ENCODE measurements at regions of chr20 and their contacts with region 1.

Region 1: GRCh38 chr20:33489495-33490022 is 337 bp upstream of the CBFA2T2 start:
- DNase-seq: peak; percentile 97 to 100 (median 99)
- ATAC-seq: peak; percentile 96
- H3K4me3 ChIP-seq: peak overlapping the region; percentile 57
- H3K4me3 Mint-ChIP-seq: peak overlapping the region; percentile 94
- H3K27ac ChIP-seq: peak overlapping the region; percentile 92 to 95
- H3K27ac Mint-ChIP-seq: peak overlapping the region; percentile 96
- H3K4me1 ChIP-seq: peaks cover 26% of the 10 kb centered on the region
- H3K4me1 Mint-ChIP-seq: peaks cover 36% of the 10 kb centered on the region
- H3K27me3 ChIP-seq: no peaks in the 10 kb centered on the region
- H3K27me3 Mint-ChIP-seq: no peaks in the 10 kb centered on the region
- CTCF ChIP-seq: no peak

Region 2: GRCh38 chr20:33097001-33097400 is 392.6 kb before region 1 on chr20:
- CTCF ChIA-PET with region 1: no interaction called
- POLR2A ChIA-PET with region 1: no interaction called
- intact Hi-C with region 1: no loop called
- DNase-seq: no peak
- ATAC-seq: no peak
- H3K4me3 ChIP-seq: no peak overlapping the region
- H3K4me3 Mint-ChIP-seq: no peak overlapping the region
- H3K27ac ChIP-seq: no peak overlapping the region
- H3K27ac Mint-ChIP-seq: no peak overlapping the region
- H3K4me1 ChIP-seq: peaks cover 6% of the 10 kb centered on the region
- H3K4me1 Mint-ChIP-seq: peaks cover 11% of the 10 kb centered on the region
- H3K27me3 ChIP-seq: no peaks in the 10 kb centered on the region
- H3K27me3 Mint-ChIP-seq: no peaks in the 10 kb centered on the region
- CTCF ChIP-seq: no peak

Region 3: DNA sequence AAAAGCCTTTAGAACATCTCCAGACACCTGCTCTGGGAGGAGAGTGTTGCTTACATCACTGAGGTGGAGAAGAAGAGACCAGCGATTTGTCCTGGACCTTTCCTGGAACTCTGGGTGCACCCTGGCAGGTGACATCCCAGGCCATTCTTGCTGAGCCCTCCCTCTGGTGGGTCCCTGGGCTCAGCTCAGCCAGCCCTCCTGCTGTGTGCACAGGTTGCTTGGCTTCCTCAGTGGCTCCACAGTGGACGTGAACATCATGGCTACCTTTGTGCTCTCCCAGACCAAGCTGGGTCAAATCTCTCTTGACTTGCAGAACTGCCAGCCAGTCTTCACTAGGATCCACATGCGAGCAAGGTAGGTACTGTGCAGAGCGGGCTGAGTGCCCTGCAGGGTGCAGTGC is 341.5 kb before region 1 on chr20:
- CTCF ChIA-PET with region 1: no interaction called
- POLR2A ChIA-PET with region 1: no interaction called
- intact Hi-C with region 1: no loop called
- DNase-seq: no peak
- ATAC-seq: no peak
- H3K4me3 ChIP-seq: no peak overlapping the region
- H3K4me3 Mint-ChIP-seq: no peak overlapping the region
- H3K27ac ChIP-seq: no peak overlapping the region
- H3K27ac Mint-ChIP-seq: no peak overlapping the region
- H3K4me1 ChIP-seq: no peaks in the 10 kb centered on the region
- H3K4me1 Mint-ChIP-seq: no peaks in the 10 kb centered on the region
- H3K27me3 ChIP-seq: peaks cover 5 to 14% of the 10 kb centered on the region in 2 experiments
- H3K27me3 Mint-ChIP-seq: peaks cover 54% of the 10 kb centered on the region
- CTCF ChIP-seq: no peak

Region 4: DNA sequence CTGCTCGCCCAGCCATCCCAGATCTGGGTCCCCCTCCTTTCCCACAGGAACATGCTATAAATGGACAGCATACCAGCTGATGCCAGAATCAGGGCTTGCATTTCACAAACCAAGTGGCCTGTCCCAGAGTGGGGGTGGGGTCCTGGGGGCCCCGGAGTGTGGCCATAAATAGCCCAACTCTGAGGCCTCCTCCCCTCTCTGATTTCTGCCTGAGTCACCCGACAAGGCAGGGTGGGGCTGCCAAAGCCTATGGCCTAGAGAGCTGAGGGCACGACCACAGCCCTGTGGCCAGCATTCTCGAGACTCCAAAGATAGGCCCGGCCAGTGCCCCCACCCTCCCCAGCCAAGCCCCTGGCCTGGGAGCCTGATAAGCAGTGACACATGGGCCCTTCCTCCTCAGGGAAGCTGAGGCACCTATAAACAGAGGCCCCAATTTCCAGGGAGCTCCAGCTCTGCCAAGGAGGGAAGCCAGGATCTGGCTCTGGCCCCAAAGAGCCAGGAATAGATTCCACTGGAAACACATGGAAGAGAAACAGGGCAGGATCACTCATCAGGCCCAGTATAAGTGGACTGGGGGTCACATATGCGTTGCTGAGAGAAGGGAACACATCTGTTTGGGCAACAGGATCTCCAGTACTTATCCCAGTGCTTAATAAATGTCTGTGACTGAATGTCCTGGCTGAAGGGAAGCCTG is 66.3 kb before region 1 on chr20:
- CTCF ChIA-PET with region 1: no interaction called
- POLR2A ChIA-PET with region 1: no interaction called
- intact Hi-C with region 1: no loop called
- DNase-seq: no peak
- ATAC-seq: no peak
- H3K4me3 ChIP-seq: no peak overlapping the region
- H3K4me3 Mint-ChIP-seq: no peak overlapping the region
- H3K27ac ChIP-seq: no peak overlapping the region
- H3K27ac Mint-ChIP-seq: no peak overlapping the region
- H3K4me1 ChIP-seq: no peaks in the 10 kb centered on the region
- H3K4me1 Mint-ChIP-seq: no peaks in the 10 kb centered on the region
- H3K27me3 ChIP-seq: no peaks in the 10 kb centered on the region
- H3K27me3 Mint-ChIP-seq: no peaks in the 10 kb centered on the region
- CTCF ChIP-seq: no peak

Region 5: GRCh38 chr20:33443512-33444239 is 45.9 kb before region 1 on chr20 and contains the start of gene SNTA1:
- CTCF ChIA-PET with region 1: interaction called, 4 read pairs
- POLR2A ChIA-PET with region 1: interaction called, 32 read pairs
- intact Hi-C with region 1: loop called in 1 of 2 experiments (anchors 1 kb)
- DNase-seq: peak; percentile 74 to 95 (median 86)
- ATAC-seq: peak; percentile 57
- H3K4me3 ChIP-seq: peak within 1 kb of the TSS; percentile 90
- H3K4me3 Mint-ChIP-seq: peak within 1 kb of the TSS; percentile 95
- H3K27ac ChIP-seq: peak within 1 kb of the TSS; percentile 72 to 80
- H3K27ac Mint-ChIP-seq: peak within 1 kb of the TSS; percentile 94
- H3K4me1 ChIP-seq: peaks cover 25% of the 10 kb centered on the region
- H3K4me1 Mint-ChIP-seq: peaks cover 22% of the 10 kb centered on the region
- H3K27me3 ChIP-seq: no peaks in the 10 kb centered on the region
- H3K27me3 Mint-ChIP-seq: no peaks in the 10 kb centered on the region
- CTCF ChIP-seq: no peak
- total RNA-seq, gene SNTA1: 5.0 to 5.2 TPM

Region 6: GRCh38 chr20:33549229-33549999 is 59.9 kb after region 1 on chr20:
- CTCF ChIA-PET with region 1: no interaction called
- POLR2A ChIA-PET with region 1: interaction called, 41 read pairs
- intact Hi-C with region 1: loop called (anchors 2 to 10 kb)
- DNase-seq: no peak
- ATAC-seq: no peak
- H3K4me3 ChIP-seq: no peak overlapping the region
- H3K4me3 Mint-ChIP-seq: no peak overlapping the region
- H3K27ac ChIP-seq: no peak overlapping the region
- H3K27ac Mint-ChIP-seq: no peak overlapping the region
- H3K4me1 ChIP-seq: peaks cover 10% of the 10 kb centered on the region
- H3K4me1 Mint-ChIP-seq: peaks cover 23% of the 10 kb centered on the region
- H3K27me3 ChIP-seq: no peaks in the 10 kb centered on the region
- H3K27me3 Mint-ChIP-seq: no peaks in the 10 kb centered on the region
- CTCF ChIP-seq: no peak

Region 7: GRCh38 chr20:33719989-33720709 is 230.6 kb after region 1 on chr20 and contains the start of gene PXMP4:
- CTCF ChIA-PET with region 1: no interaction called
- POLR2A ChIA-PET with region 1: interaction called, 20 read pairs
- intact Hi-C with region 1: loop called in 1 of 2 experiments (anchors 10 kb)
- DNase-seq: peak; percentile 68 to 97 (median 82)
- ATAC-seq: peak; percentile 94
- H3K4me3 ChIP-seq: peak within 1 kb of the TSS; percentile 66
- H3K4me3 Mint-ChIP-seq: peak within 1 kb of the TSS; percentile 83
- H3K27ac ChIP-seq: peak within 1 kb of the TSS; percentile 2 to 72
- H3K27ac Mint-ChIP-seq: peak within 1 kb of the TSS; percentile 60
- H3K4me1 ChIP-seq: peaks cover 20% of the 10 kb centered on the region
- H3K4me1 Mint-ChIP-seq: peaks cover 18% of the 10 kb centered on the region
- H3K27me3 ChIP-seq: no peaks in the 10 kb centered on the region
- H3K27me3 Mint-ChIP-seq: no peaks in the 10 kb centered on the region
- CTCF ChIP-seq: peak; percentile 13
- total RNA-seq, gene PXMP4: 3.6 to 4.1 TPM

Region 8: GRCh38 chr20:34558320-34559218 is 1069.0 kb after region 1 on chr20 and contains the start of gene MAP1LC3A:
- CTCF ChIA-PET with region 1: no interaction called
- POLR2A ChIA-PET with region 1: no interaction called
- intact Hi-C with region 1: loop called in 1 of 2 experiments (anchors 5 kb)
- DNase-seq: peak; percentile 71 to 98 (median 92)
- ATAC-seq: peak; percentile 81
- H3K4me3 ChIP-seq: peak within 1 kb of the TSS; percentile 82
- H3K4me3 Mint-ChIP-seq: peak within 1 kb of the TSS; percentile 84
- H3K27ac ChIP-seq: peak within 1 kb of the TSS; percentile 87 to 94
- H3K27ac Mint-ChIP-seq: peak within 1 kb of the TSS; percentile 90
- H3K4me1 ChIP-seq: peaks cover 11% of the 10 kb centered on the region
- H3K4me1 Mint-ChIP-seq: peaks cover 14% of the 10 kb centered on the region
- H3K27me3 ChIP-seq: no peaks in the 10 kb centered on the region
- H3K27me3 Mint-ChIP-seq: no peaks in the 10 kb centered on the region
- CTCF ChIP-seq: no peak
- total RNA-seq, gene MAP1LC3A: 17.5 to 17.7 TPM